Cardiac septum (tissue), 1 donor: ENCODE measurements at regions of chrX and their contacts with region 1.

Region 1: DNA sequence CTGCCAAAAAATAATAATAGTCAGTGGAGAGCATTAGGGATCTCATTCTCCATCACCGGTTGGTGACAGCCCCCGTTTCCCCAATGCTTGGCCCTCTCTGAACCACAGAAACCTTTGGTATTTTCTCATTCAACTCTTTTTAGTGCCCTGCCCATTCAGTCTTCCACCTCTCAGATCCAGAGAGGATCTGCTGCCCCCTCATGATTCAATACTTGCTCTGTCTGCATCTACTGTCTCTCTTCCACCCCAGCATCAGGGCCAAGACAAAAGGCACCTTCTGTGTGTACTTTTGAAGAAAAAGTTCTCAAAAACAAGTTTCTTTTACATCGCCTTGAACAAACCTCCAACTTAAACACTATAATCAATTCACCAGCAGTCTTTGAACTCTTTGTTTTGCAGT is 19.3 kb downstream of the CLTRN start:
- DNase-seq: no peak

Region 2: GRCh38 chrX:15493118-15493962 is 151.9 kb before region 1 on chrX and contains the start of gene PIR:
- intact Hi-C with region 1: loop called (anchors 10 kb)
- DNase-seq: peak; percentile 93
- total RNA-seq, gene PIR: 15.7 TPM

Region 3: GRCh38 chrX:15594371-15594770 is 50.9 kb before region 1 on chrX:
- intact Hi-C with region 1: loop called (anchors 5 kb)
- DNase-seq: no peak